ENCODE measurements at regions of chr1 and their contacts with region 1.

Region 1: DNA sequence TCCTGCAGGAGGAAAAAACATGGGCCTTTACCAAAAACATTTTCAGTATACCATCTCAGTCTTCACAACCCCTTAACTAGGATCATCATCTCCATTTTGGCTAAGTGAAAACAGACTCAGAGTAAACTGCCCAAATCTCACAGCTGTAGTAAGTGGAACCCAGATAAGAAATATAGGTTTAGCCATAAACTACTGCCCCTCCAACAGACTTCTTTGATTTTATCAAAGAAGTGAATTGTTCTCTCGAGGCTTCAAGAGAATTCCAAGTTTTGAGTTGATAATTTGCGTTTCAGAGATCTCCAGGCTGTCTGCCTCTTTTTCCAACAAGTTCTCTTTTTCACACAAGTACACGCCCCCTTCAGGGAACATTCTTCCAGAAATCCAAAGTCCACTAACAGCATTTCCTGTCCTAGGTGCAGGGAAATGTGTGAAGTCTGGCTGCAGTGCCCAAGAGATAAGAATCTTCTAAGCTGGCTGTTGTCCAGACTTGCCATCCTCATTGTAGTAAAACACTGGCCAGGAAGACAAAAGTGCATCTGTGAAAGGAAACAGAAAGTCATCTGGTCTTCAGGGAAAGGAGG is 30.8 kb downstream of the RNF19B start:
- DNase-seq: no peak
- ATAC-seq: no peak
- H3K4me3 ChIP-seq: no peak overlapping the region
- H3K4me3 Mint-ChIP-seq: no peak overlapping the region
- H3K27ac ChIP-seq: no peak overlapping the region
- H3K27ac Mint-ChIP-seq: peak overlapping the region in 1 of 2 donors; percentile 42
- H3K4me1 ChIP-seq: no peaks in the 10 kb centered on the region
- H3K4me1 Mint-ChIP-seq: peaks cover 0 to 11% of the 10 kb centered on the region in 2 donors
- H3K27me3 ChIP-seq: no peaks in the 10 kb centered on the region
- H3K27me3 Mint-ChIP-seq: no peaks in the 10 kb centered on the region
- CTCF ChIP-seq: no peak

Region 2: DNA sequence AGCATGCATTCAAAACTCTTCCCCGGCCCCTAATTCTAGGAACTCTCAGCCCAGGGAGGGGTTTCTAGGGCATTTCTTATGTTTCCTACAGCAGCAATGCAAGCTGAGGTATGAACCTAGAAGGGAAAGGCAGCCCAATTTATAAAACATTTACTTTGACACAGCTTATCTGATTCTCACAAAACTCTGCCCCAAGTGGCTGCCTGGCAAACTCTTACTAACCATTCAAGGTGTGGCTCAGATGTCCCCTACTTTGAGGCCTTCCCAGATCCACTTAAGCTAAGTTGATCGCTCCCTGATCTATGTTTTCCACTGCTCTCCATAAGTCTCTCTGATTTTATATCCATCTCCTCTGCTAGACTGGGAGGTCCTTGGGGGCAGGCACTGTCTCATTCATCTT is 67.5 kb after region 1 on chr1:
- intact Hi-C with region 1: loop called (anchors 5 kb)
- DNase-seq: peak in 1 of 2 donors; percentile 34
- ATAC-seq: no peak
- H3K4me3 ChIP-seq: no peak overlapping the region
- H3K4me3 Mint-ChIP-seq: no peak overlapping the region
- H3K27ac ChIP-seq: no peak overlapping the region
- H3K27ac Mint-ChIP-seq: no peak overlapping the region
- H3K4me1 ChIP-seq: peaks cover 9% of the 10 kb centered on the region
- H3K4me1 Mint-ChIP-seq: peaks cover 8 to 29% of the 10 kb centered on the region in 2 donors
- H3K27me3 ChIP-seq: no peaks in the 10 kb centered on the region
- H3K27me3 Mint-ChIP-seq: no peaks in the 10 kb centered on the region
- CTCF ChIP-seq: no peak

Region 3: GRCh38 chr1:33055210-33056008 is 121.6 kb after region 1 on chr1:
- intact Hi-C with region 1: loop called (anchors 1 kb)
- DNase-seq: peak; percentile 23 to 69
- ATAC-seq: peak; percentile 81 to 86 (median 84)
- H3K4me3 ChIP-seq: no peak overlapping the region
- H3K4me3 Mint-ChIP-seq: no peak overlapping the region
- H3K27ac ChIP-seq: no peak overlapping the region
- H3K27ac Mint-ChIP-seq: peak overlapping the region; percentile 29 to 37
- H3K4me1 ChIP-seq: peaks cover 17% of the 10 kb centered on the region
- H3K4me1 Mint-ChIP-seq: peaks cover 8 to 14% of the 10 kb centered on the region in 2 donors
- H3K27me3 ChIP-seq: no peaks in the 10 kb centered on the region
- H3K27me3 Mint-ChIP-seq: peaks cover 8 to 10% of the 10 kb centered on the region in 2 donors
- CTCF ChIP-seq: peak; percentile 60

Region 4: DNA sequence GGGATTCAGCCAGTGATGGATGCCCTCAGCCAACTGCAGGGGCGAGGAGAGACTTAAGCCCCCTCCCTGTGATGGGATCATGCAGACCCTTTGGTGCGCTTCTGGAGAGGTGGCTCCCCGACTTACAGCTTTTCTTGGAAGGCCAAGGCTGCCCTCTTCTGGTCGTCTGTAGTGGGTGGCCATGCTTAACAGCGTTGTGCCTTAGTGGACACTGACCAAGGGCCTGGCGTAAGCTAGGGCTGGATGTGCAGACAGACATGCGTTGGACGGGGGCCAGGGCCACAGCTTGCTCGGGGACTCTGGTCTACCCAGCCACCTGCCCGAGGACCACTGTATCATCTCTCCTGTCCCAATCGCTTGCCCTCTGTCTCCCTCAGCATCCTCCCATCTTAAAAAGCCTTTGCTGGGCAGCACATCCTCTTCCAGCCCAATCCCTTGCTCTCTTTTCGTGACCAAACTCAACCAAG is 152.6 kb after region 1 on chr1:
- intact Hi-C with region 1: loop called (anchors 1 kb)
- DNase-seq: peak in 1 of 2 donors; percentile 64
- ATAC-seq: peak; percentile 58 to 72 (median 67)
- H3K4me3 ChIP-seq: no peak overlapping the region
- H3K4me3 Mint-ChIP-seq: no peak overlapping the region
- H3K27ac ChIP-seq: no peak overlapping the region
- H3K27ac Mint-ChIP-seq: no peak overlapping the region
- H3K4me1 ChIP-seq: peaks cover 27% of the 10 kb centered on the region
- H3K4me1 Mint-ChIP-seq: peaks cover 28 to 33% of the 10 kb centered on the region in 2 donors
- H3K27me3 ChIP-seq: no peaks in the 10 kb centered on the region
- H3K27me3 Mint-ChIP-seq: peaks cover 0 to 7% of the 10 kb centered on the region in 2 donors
- CTCF ChIP-seq: peak; percentile 44

Region 5: GRCh38 chr1:33195556-33195955 is 261.7 kb after region 1 on chr1:
- intact Hi-C with region 1: no loop called
- DNase-seq: no peak
- ATAC-seq: no peak
- H3K4me3 ChIP-seq: no peak overlapping the region
- H3K4me3 Mint-ChIP-seq: no peak overlapping the region
- H3K27ac ChIP-seq: no peak overlapping the region
- H3K27ac Mint-ChIP-seq: no peak overlapping the region
- H3K4me1 ChIP-seq: peaks cover 3% of the 10 kb centered on the region
- H3K4me1 Mint-ChIP-seq: peaks cover 0 to 5% of the 10 kb centered on the region in 2 donors
- H3K27me3 ChIP-seq: peaks cover 6% of the 10 kb centered on the region
- H3K27me3 Mint-ChIP-seq: peaks cover 30 to 49% of the 10 kb centered on the region in 2 donors
- CTCF ChIP-seq: no peak

Region 6: DNA sequence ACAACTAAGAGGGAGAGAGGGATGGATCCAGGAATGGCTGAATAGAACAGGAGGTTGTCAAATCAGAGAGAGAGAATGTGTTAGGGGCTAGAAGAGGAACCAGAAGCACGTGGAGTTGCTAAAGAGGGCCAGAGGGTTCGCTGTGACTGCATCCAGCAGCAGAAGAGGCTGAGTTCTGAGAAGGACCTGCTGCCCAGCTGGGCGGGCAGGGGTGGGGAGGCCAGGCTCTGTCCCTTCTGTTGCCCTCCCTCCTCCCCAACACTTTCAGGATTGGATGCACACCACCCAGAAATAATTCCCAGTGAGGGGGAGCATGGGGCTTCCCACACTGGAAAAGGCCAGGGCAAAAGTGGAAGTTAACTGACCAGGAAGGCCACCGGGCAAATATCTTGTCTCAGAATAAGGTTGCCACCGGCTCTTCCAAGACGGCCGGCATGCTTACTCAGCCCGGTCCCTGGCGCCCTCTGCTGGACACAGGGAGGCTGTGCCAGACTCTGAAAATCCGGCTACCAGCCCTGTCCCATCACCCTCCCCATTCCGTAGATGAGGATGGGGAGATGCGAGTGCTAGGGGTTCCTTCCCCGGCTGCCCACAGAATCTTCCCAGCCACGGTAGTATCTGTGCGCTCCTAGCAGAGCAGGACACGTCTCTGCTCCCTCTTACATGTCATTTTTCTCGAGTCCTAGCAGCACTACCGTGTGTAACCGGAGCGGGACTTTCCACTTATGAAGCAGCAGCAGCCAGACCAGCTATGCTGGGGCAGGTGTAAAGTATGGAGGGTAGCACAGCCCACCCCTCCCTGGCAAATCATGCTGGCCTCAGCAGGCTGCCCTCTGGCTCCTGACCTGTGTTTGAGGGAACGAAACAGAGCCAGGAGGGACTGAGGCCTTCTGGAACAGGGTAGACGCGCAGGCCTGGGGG is 433.9 kb after region 1 on chr1:
- intact Hi-C with region 1: loop called (anchors 5 kb)
- DNase-seq: peak; percentile 82 to 91
- ATAC-seq: peak; percentile 92 to 100 (median 98)
- H3K4me3 ChIP-seq: no peak overlapping the region
- H3K4me3 Mint-ChIP-seq: no peak overlapping the region
- H3K27ac ChIP-seq: no peak overlapping the region
- H3K27ac Mint-ChIP-seq: no peak overlapping the region
- H3K4me1 ChIP-seq: peaks cover 6% of the 10 kb centered on the region
- H3K4me1 Mint-ChIP-seq: peaks cover 0 to 3% of the 10 kb centered on the region in 2 donors
- H3K27me3 ChIP-seq: no peaks in the 10 kb centered on the region
- H3K27me3 Mint-ChIP-seq: peaks cover 0 to 4% of the 10 kb centered on the region in 2 donors
- CTCF ChIP-seq: peak; percentile 95

Measured in natural killer cell (primary cell).